ENCODE measurements at regions of chr22 and their contacts with region 1.

Region 1: GRCh38 chr22:41857155-41857859 is 24.4 kb downstream of the SREBF2 start:
- DNase-seq: peak; percentile 91
- ATAC-seq: peak; percentile 73
- H3K4me3 Mint-ChIP-seq: peak overlapping the region; percentile 13
- H3K27ac Mint-ChIP-seq: peak overlapping the region; percentile 93
- H3K4me1 Mint-ChIP-seq: peaks cover 68% of the 10 kb centered on the region
- H3K27me3 Mint-ChIP-seq: no peaks in the 10 kb centered on the region
- CTCF ChIP-seq: peak; percentile 91

Region 2: DNA sequence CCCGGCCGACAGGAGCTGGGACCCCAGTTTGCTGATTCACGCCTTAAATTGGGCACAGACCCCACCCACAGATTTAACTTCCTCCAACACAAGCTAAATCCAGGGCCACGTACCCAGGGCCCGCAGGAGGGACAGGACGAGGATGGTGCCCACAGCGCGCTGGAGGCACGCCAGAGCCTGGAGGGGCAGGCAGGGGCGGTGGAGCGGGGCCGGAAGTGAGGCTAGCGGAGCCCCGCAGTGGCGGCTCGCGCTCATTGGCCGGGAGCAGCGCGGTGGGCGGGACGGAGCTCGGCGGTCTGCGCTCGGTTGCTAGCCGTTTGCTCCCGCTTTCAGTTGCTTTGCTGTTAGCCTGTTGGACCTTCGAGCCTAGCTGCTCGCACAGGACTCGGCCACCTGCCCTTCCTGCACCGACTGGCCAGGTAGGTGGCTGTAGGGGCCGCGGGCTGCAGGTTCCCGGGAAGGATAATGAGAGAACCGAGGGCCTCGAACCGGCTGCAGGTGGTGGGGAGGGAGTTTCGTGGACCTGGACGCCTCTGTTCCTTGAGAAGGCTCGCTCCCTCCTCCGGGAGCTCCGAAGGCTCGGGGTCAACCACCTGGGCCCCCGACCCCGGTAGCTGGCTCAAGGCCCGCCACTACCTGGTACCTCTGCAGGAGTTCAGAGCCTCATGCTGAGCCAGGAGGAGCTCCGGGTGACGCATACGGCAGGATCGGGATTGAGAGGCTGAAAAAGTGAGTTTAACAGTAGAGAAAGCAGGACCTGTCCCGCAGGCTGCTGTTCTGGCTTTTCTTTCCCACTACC is 56.8 kb before region 1 on chr22 and contains the start of gene CCDC134:
- CTCF ChIA-PET with region 1: interaction called, 9 read pairs
- POLR2A ChIA-PET with region 1: interaction called, 20 read pairs
- intact Hi-C with region 1: no loop called
- DNase-seq: peak; percentile 93
- ATAC-seq: peak; percentile 98
- H3K4me3 Mint-ChIP-seq: peak within 1 kb of the TSS; percentile 89
- H3K27ac Mint-ChIP-seq: peak within 1 kb of the TSS; percentile 93
- H3K4me1 Mint-ChIP-seq: peaks cover 30% of the 10 kb centered on the region
- H3K27me3 Mint-ChIP-seq: no peaks in the 10 kb centered on the region
- CTCF ChIP-seq: no peak
- total RNA-seq, gene CCDC134: 15.2 to 15.9 TPM

Region 3: GRCh38 chr22:41832553-41833368 is 24.5 kb before region 1 on chr22 and contains the start of gene SREBF2:
- CTCF ChIA-PET with region 1: interaction called, 38 read pairs
- POLR2A ChIA-PET with region 1: interaction called, 50 read pairs
- intact Hi-C with region 1: no loop called
- DNase-seq: peak; percentile 100
- ATAC-seq: peak; percentile 95
- H3K4me3 Mint-ChIP-seq: peak within 1 kb of the TSS; percentile 92
- H3K27ac Mint-ChIP-seq: peak within 1 kb of the TSS; percentile 100
- H3K4me1 Mint-ChIP-seq: peaks cover 47% of the 10 kb centered on the region
- H3K27me3 Mint-ChIP-seq: no peaks in the 10 kb centered on the region
- CTCF ChIP-seq: no peak
- total RNA-seq, gene SREBF2: 87.1 to 92.9 TPM

Region 4: DNA sequence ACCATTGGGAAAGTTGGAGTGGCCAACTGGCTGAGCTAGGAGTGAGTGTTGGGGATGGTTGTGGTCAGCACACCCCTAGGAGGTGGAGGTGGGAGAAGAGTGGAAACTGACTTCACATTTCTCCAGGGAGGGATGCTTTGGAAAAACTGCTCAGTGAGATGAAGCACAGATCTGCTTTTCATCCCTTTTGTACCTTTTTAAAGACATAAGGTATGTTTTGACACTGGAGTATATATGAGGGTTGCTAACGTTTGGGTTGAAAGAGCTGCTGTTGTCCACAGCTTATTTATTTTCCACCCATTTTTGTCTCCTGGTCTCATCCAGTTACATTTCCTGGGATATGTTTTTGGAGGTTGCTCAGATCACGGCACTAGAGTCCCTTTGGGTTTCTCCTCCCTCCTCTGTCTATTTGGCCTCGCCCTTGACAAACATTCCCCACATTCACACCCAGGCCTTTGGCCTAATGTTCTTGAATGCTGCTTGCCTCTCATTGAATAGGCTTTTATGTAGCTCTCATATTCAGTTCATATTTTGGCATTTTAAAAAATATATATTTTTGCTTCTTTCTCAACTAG is 16.1 kb before region 1 on chr22:
- CTCF ChIA-PET with region 1: interaction called, 42 read pairs
- POLR2A ChIA-PET with region 1: interaction called, 18 read pairs
- intact Hi-C with region 1: loop called (anchors 1 kb)
- DNase-seq: no peak
- ATAC-seq: no peak
- H3K4me3 Mint-ChIP-seq: no peak overlapping the region
- H3K27ac Mint-ChIP-seq: no peak overlapping the region
- H3K4me1 Mint-ChIP-seq: peaks cover 70% of the 10 kb centered on the region
- H3K27me3 Mint-ChIP-seq: no peaks in the 10 kb centered on the region
- CTCF ChIP-seq: no peak

Region 5: DNA sequence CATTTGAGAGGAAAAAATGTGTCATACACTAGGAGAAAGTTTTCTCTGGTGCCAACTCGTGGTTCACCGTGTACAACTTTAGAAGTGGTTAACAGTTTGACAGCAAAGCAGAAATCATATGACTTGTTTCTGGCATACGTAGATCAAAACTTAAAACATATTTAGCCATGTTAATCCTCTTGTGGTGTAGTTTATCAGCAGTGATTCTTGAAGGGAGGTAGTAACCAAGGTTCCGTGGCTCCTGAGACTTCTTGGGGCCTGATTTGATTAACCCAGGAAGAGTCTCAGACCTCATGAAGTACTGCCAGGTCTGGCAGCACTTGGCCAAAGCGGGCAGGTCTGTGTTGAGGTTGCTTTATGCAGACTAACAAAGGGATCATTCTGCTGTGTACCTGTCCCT is 16.1 kb after region 1 on chr22:
- CTCF ChIA-PET with region 1: interaction called, 18 read pairs
- POLR2A ChIA-PET with region 1: interaction called, 44 read pairs
- intact Hi-C with region 1: loop called (anchors 2 kb)
- DNase-seq: peak; percentile 67
- ATAC-seq: peak; percentile 85
- H3K4me3 Mint-ChIP-seq: peak overlapping the region; percentile 0
- H3K27ac Mint-ChIP-seq: peak overlapping the region; percentile 70
- H3K4me1 Mint-ChIP-seq: peaks cover 52% of the 10 kb centered on the region
- H3K27me3 Mint-ChIP-seq: no peaks in the 10 kb centered on the region
- CTCF ChIP-seq: no peak

Region 6: GRCh38 chr22:41925655-41926460 is 68.6 kb after region 1 on chr22:
- CTCF ChIA-PET with region 1: interaction called, 12 read pairs
- POLR2A ChIA-PET with region 1: interaction called, 5 read pairs
- intact Hi-C with region 1: no loop called
- DNase-seq: peak; percentile 86
- ATAC-seq: peak; percentile 89
- H3K4me3 Mint-ChIP-seq: peak overlapping the region; percentile 64
- H3K27ac Mint-ChIP-seq: no peak overlapping the region
- H3K4me1 Mint-ChIP-seq: peaks cover 27% of the 10 kb centered on the region
- H3K27me3 Mint-ChIP-seq: peaks cover 2% of the 10 kb centered on the region
- CTCF ChIP-seq: peak; percentile 83

Region 7: DNA sequence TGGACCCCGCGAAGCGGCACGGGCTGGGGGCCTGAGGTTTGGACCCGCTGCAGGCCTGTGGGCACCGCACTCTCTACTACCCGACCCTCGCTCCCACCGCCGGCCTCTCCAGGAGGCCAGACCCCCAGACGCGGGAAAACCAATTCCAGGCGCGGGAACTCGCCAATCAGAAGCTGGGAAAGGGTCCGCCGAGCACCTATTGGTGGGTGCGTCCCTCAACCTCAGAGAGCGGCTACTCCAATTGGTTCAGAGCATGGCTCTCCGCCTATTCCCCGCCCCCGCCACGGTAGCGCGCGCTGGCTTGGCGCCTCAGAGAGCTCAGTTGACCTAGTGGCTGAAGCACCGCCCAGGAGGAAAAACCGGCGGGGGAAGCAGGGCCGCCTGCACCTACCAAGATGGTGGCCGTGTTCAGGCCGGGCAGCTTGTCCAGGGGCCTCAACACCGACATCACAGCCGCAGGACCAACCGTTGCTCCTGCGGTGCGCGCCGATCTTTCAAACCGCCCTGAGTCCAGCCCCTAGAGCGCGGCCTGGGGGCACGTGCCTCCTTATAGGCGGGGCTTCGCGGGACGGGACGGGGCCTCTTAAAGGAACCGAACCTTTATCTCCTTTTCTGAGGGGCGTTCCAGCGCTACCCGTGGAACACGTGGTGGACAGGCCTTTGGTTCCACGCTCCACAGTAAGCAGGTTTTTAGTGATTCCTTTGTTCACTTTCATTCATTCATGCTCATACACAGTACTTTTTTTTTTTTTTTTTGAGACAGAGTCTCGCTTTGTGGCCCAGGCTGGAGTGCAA is 89.5 kb after region 1 on chr22 and contains the start of gene CENPM:
- CTCF ChIA-PET with region 1: interaction called, 3 read pairs
- POLR2A ChIA-PET with region 1: interaction called, 10 read pairs
- intact Hi-C with region 1: loop called (anchors 5 kb)
- DNase-seq: peak; percentile 98
- ATAC-seq: peak; percentile 97
- H3K4me3 Mint-ChIP-seq: peak within 1 kb of the TSS; percentile 88
- H3K27ac Mint-ChIP-seq: peak within 1 kb of the TSS; percentile 94
- H3K4me1 Mint-ChIP-seq: peaks cover 41% of the 10 kb centered on the region
- H3K27me3 Mint-ChIP-seq: no peaks in the 10 kb centered on the region
- CTCF ChIP-seq: peak; percentile 10
- total RNA-seq, gene CENPM: 62.5 to 63.1 TPM